ENCODE measurements at regions of chr10 and their contacts with region 1.

Region 1: DNA sequence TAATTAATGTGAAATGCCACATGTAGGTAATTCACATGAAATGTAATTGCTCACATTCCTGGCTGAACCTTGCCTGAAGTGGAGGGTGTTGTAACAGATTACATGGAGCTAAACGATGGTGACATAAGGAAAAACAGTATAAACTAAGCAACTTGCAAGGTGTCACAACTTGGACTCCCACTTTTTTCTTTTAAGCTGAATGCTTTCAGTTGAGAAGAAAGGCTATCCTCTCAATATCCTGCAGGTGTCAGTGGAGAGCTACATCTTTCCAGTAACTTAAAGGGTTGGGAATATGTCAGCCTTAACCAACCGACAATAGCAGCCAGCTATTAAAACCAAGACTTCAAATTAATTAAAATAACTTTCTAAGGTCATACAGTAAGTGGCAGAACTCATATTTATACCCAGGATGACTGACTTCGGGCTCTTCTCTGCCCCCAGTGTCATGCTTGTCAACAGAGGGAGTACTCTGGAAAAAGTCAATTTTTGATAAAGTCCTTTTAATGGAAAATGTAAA is 33.7 kb downstream of the NRBF2 start:
- DNase-seq: peak; percentile 74
- ATAC-seq: peak; percentile 84
- H3K4me3 ChIP-seq: no peak overlapping the region
- H3K4me3 Mint-ChIP-seq: no peak overlapping the region
- H3K27ac ChIP-seq: no peak overlapping the region
- H3K27ac Mint-ChIP-seq: no peak overlapping the region
- H3K4me1 ChIP-seq: no peaks in the 10 kb centered on the region
- H3K4me1 Mint-ChIP-seq: peaks cover 2% of the 10 kb centered on the region
- H3K27me3 ChIP-seq: no peaks in the 10 kb centered on the region
- H3K27me3 Mint-ChIP-seq: no peaks in the 10 kb centered on the region
- CTCF ChIP-seq: peak; percentile 83

Region 2: GRCh38 chr10:63071140-63071539 is 95.7 kb before region 1 on chr10:
- CTCF ChIA-PET with region 1: no interaction called
- POLR2A ChIA-PET with region 1: no interaction called
- intact Hi-C with region 1: no loop called
- DNase-seq: no peak
- ATAC-seq: no peak
- H3K4me3 ChIP-seq: no peak overlapping the region
- H3K4me3 Mint-ChIP-seq: no peak overlapping the region
- H3K27ac ChIP-seq: no peak overlapping the region
- H3K27ac Mint-ChIP-seq: no peak overlapping the region
- H3K4me1 ChIP-seq: no peaks in the 10 kb centered on the region
- H3K4me1 Mint-ChIP-seq: no peaks in the 10 kb centered on the region
- H3K27me3 ChIP-seq: peaks cover 0 to 13% (median 7%) of the 10 kb centered on the region in 4 experiments
- H3K27me3 Mint-ChIP-seq: peaks cover 50% of the 10 kb centered on the region
- CTCF ChIP-seq: no peak

Region 3: DNA sequence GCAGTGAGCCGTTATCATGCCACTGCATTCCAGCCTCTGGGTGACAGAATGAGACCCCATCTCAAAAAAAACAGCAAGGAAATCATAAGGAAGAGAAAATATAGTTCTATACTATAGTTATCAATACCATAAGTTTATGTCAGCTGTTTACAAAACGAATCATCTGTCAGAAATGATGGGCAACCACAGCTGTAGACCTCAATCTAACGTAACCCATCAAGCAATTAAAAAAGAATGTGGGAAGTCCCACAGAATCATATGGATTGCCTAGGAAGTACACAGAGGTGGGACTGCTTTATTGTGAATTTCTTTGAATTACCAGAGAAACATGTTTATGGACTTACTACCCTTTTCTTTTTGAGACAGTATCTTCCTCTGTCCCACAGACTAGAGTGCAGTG is 26.7 kb before region 1 on chr10:
- CTCF ChIA-PET with region 1: interaction called, 13 read pairs
- POLR2A ChIA-PET with region 1: no interaction called
- intact Hi-C with region 1: no loop called
- DNase-seq: no peak
- ATAC-seq: no peak
- H3K4me3 ChIP-seq: no peak overlapping the region
- H3K4me3 Mint-ChIP-seq: no peak overlapping the region
- H3K27ac ChIP-seq: no peak overlapping the region
- H3K27ac Mint-ChIP-seq: no peak overlapping the region
- H3K4me1 ChIP-seq: peaks cover 17 to 18% of the 10 kb centered on the region in 2 donors
- H3K4me1 Mint-ChIP-seq: peaks cover 65% of the 10 kb centered on the region
- H3K27me3 ChIP-seq: no peaks in the 10 kb centered on the region
- H3K27me3 Mint-ChIP-seq: no peaks in the 10 kb centered on the region
- CTCF ChIP-seq: no peak

Region 4: GRCh38 chr10:63145782-63146181 is 21.0 kb before region 1 on chr10:
- CTCF ChIA-PET with region 1: interaction called, 13 read pairs
- POLR2A ChIA-PET with region 1: no interaction called
- intact Hi-C with region 1: no loop called
- DNase-seq: no peak
- ATAC-seq: no peak
- H3K4me3 ChIP-seq: no peak overlapping the region
- H3K4me3 Mint-ChIP-seq: no peak overlapping the region
- H3K27ac ChIP-seq: no peak overlapping the region
- H3K27ac Mint-ChIP-seq: no peak overlapping the region
- H3K4me1 ChIP-seq: peaks cover 0 to 8% of the 10 kb centered on the region in 2 donors
- H3K4me1 Mint-ChIP-seq: peaks cover 50% of the 10 kb centered on the region
- H3K27me3 ChIP-seq: no peaks in the 10 kb centered on the region
- H3K27me3 Mint-ChIP-seq: no peaks in the 10 kb centered on the region
- CTCF ChIP-seq: no peak

Region 5: DNA sequence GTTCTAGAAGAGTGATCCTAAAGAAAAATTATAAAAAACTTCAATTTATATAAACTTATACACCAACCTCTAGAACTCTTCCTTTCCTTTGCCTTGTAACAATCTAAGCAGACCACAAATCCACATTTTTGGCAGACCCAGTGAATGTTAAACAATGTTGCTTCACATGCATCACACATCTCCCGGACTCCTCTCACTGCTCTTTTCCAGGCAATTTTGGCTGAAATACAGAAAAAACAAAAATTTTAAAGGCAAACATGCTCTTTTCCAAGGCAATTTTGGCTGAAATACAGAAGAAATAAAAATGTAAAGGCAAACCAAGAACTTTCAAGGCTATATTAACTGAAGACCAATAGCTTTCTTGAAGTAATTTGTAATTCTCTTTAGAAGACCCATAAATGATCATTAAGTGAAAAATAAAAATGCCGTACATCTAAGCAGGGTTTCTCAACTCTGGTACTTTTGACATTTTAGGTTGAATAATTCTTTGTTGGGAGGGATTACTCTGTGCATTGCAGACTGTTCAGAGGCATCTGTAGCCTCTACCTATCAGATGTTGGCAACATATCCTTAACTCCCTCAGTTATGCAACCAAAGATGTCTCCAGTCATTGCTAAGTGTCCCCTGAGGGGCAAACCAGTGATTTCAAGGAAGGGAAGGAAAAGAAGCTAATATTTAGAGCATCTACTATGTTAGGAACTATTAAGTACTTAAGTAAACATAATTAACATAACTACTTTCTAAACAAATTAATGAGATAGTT is 30.7 kb after region 1 on chr10:
- CTCF ChIA-PET with region 1: interaction called, 16 read pairs
- POLR2A ChIA-PET with region 1: no interaction called
- intact Hi-C with region 1: no loop called
- DNase-seq: no peak
- ATAC-seq: no peak
- H3K4me3 ChIP-seq: no peak overlapping the region
- H3K4me3 Mint-ChIP-seq: no peak overlapping the region
- H3K27ac ChIP-seq: no peak overlapping the region
- H3K27ac Mint-ChIP-seq: peak overlapping the region; percentile 32
- H3K4me1 ChIP-seq: peaks cover 0 to 5% of the 10 kb centered on the region in 2 donors
- H3K4me1 Mint-ChIP-seq: peaks cover 8% of the 10 kb centered on the region
- H3K27me3 ChIP-seq: no peaks in the 10 kb centered on the region
- H3K27me3 Mint-ChIP-seq: no peaks in the 10 kb centered on the region
- CTCF ChIP-seq: no peak

Region 6: GRCh38 chr10:63206997-63207811 is 40.4 kb after region 1 on chr10:
- CTCF ChIA-PET with region 1: interaction called, 7 read pairs
- POLR2A ChIA-PET with region 1: no interaction called
- intact Hi-C with region 1: loop called (anchors 5 kb)
- DNase-seq: no peak
- ATAC-seq: peak; percentile 61
- H3K4me3 ChIP-seq: no peak overlapping the region
- H3K4me3 Mint-ChIP-seq: peak overlapping the region; percentile 64
- H3K27ac ChIP-seq: peak overlapping the region in 1 of 2 donors; percentile 39
- H3K27ac Mint-ChIP-seq: peak overlapping the region; percentile 76
- H3K4me1 ChIP-seq: peaks cover 29 to 30% of the 10 kb centered on the region in 2 donors
- H3K4me1 Mint-ChIP-seq: peaks cover 59% of the 10 kb centered on the region
- H3K27me3 ChIP-seq: no peaks in the 10 kb centered on the region
- H3K27me3 Mint-ChIP-seq: no peaks in the 10 kb centered on the region
- CTCF ChIP-seq: no peak

Region 7: DNA sequence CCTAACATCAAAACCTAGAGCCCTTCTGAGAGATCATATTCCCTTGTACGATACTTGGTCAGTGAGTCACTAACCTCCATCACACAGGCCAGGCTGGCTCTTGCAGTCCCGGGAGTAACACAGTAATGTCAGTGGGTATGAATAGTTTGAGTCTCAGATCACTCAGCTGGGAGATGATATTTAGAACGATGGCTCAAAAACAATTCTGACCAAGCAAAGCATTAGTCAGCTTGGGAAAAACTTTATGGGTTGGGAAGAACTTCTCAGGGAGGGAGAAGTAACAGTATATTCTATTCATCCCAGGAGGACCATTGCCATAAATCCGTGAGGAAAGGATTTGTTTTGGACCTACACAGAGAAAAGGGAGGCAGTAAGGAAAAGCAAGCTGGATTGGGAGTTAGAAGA is 533.4 kb after region 1 on chr10:
- CTCF ChIA-PET with region 1: interaction called, 10 read pairs
- POLR2A ChIA-PET with region 1: no interaction called
- intact Hi-C with region 1: no loop called
- DNase-seq: no peak
- ATAC-seq: no peak
- H3K4me3 ChIP-seq: no peak overlapping the region
- H3K4me3 Mint-ChIP-seq: no peak overlapping the region
- H3K27ac ChIP-seq: peak overlapping the region in 1 of 2 donors; percentile 13
- H3K27ac Mint-ChIP-seq: peak overlapping the region; percentile 13
- H3K4me1 ChIP-seq: peaks cover 30 to 31% of the 10 kb centered on the region in 2 donors
- H3K4me1 Mint-ChIP-seq: peaks cover 41% of the 10 kb centered on the region
- H3K27me3 ChIP-seq: no peaks in the 10 kb centered on the region
- H3K27me3 Mint-ChIP-seq: no peaks in the 10 kb centered on the region
- CTCF ChIP-seq: no peak

Region 8: GRCh38 chr10:63767138-63767801 is 600.5 kb after region 1 on chr10:
- CTCF ChIA-PET with region 1: interaction called, 11 read pairs
- POLR2A ChIA-PET with region 1: no interaction called
- intact Hi-C with region 1: loop called (anchors 1 kb)
- DNase-seq: no peak
- ATAC-seq: no peak
- H3K4me3 ChIP-seq: no peak overlapping the region
- H3K4me3 Mint-ChIP-seq: no peak overlapping the region
- H3K27ac ChIP-seq: no peak overlapping the region
- H3K27ac Mint-ChIP-seq: no peak overlapping the region
- H3K4me1 ChIP-seq: no peaks in the 10 kb centered on the region
- H3K4me1 Mint-ChIP-seq: no peaks in the 10 kb centered on the region
- H3K27me3 ChIP-seq: no peaks in the 10 kb centered on the region
- H3K27me3 Mint-ChIP-seq: peaks cover 8% of the 10 kb centered on the region
- CTCF ChIP-seq: no peak